PC-9 (cell line): ENCODE measurements at regions of chr2 and their contacts with region 1.

Region 1: GRCh38 chr2:183267148-183267827 is 143.0 kb downstream of the NUP35 start:
- DNase-seq: no peak
- H3K4me3 ChIP-seq: no peak overlapping the region
- H3K27ac ChIP-seq: no peak overlapping the region
- H3K4me1 ChIP-seq: no peaks in the 10 kb centered on the region
- H3K27me3 ChIP-seq: no peaks in the 10 kb centered on the region
- CTCF ChIP-seq: no peak

Region 2: DNA sequence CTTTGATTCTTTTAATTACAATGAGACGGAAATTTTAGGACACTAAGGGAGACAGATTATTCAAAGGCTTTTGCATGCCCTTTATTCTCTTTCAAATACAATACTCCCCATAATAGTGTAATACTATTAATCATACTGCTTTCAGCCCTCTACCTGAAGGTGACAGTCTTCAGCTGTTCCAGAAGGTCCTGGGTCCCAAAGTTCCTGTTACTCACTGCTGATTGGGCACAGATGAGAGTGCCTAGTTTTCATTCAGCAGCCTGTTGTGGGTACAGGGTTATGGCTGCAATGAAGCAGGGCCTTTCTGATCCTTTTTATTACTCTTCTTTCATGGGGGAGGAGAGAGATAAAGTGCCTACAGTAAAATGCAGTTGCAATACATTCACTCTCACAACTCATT is 62.9 kb before region 1 on chr2:
- CTCF ChIA-PET with region 1: no interaction called
- POLR2A ChIA-PET with region 1: interaction called, 25 read pairs
- intact Hi-C with region 1: no loop called
- DNase-seq: no peak
- H3K4me3 ChIP-seq: no peak overlapping the region
- H3K27ac ChIP-seq: no peak overlapping the region
- H3K4me1 ChIP-seq: no peaks in the 10 kb centered on the region
- H3K27me3 ChIP-seq: no peaks in the 10 kb centered on the region
- CTCF ChIP-seq: no peak

Region 3: DNA sequence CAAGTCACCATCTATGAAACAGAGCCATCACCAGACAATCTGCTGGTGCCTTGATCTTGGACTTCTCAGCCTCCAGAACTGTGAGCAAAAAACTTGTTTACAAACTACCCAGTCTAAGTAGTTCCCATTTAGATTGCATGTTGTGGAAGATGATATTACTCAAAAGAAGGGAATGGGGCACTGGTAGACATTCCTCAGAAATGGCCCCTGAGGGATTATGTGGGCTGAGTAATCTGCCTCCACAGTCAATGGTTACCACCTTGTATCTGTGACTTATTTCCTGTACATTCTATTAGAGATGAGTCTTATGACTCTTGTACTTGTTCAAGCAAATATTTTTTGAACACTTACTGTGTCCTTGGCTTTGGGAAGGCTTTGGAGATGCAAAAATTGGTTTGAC is 17.3 kb after region 1 on chr2:
- CTCF ChIA-PET with region 1: no interaction called
- POLR2A ChIA-PET with region 1: no interaction called
- intact Hi-C with region 1: no loop called
- DNase-seq: peak in 1 of 2 experiments; percentile 53
- H3K4me3 ChIP-seq: no peak overlapping the region
- H3K27ac ChIP-seq: no peak overlapping the region
- H3K4me1 ChIP-seq: peaks cover 19% of the 10 kb centered on the region; the same call in 1 of the 2 replicates
- H3K27me3 ChIP-seq: no peaks in the 10 kb centered on the region
- CTCF ChIP-seq: no peak

Region 4: DNA sequence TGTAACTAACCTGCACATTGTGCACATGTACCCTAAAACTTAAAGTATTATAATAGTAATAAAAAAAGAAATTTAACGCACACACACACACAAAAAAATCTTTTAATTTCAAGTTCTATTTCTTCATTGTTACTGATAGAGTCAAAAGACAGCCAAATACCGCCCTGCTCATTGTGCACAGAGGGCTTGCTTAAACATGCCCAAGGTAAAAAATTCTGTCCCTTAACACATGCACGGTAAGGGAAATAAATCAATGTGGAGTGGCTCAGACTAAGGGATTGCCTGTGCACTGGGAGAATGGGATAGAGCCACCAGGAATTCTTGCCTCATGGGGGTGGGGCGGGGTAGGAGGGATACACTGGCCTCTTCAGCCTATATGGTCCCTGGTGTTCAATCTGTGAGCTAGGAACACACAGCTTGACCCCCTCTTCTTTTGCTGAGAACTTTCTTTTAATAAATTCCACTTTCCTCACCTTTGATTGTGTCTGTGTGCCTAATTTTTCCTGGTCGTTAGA is 325.0 kb after region 1 on chr2:
- CTCF ChIA-PET with region 1: no interaction called
- POLR2A ChIA-PET with region 1: no interaction called
- intact Hi-C with region 1: no loop called
- DNase-seq: no peak
- H3K4me3 ChIP-seq: no peak overlapping the region
- H3K27ac ChIP-seq: no peak overlapping the region
- H3K4me1 ChIP-seq: no peaks in the 10 kb centered on the region
- H3K27me3 ChIP-seq: no peaks in the 10 kb centered on the region
- CTCF ChIP-seq: no peak